ENCODE measurements at regions of chr14 and their contacts with region 1.

Region 1: DNA sequence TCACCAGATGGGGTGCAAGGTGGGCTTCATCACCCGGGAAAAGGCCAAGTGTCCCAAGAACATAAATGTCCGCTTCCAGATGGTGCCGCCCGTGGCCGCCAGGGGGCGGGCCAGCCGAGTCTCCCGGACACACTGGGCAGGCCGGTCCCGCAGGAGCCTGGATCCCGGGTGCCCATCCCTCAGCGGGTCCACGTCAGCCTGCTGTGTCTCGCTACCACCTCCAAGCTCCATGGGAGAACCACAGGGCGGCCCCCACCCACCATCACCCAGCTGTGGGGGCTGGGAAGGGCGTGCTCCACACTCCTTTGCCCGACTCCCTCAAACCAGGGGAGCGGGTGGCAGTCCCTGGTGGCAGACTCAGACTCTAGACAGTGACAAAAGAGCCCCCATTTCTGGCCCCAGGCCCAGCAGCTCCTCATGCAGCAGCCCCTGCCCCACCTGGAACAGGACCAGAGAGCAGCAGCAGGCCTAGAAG is 22.0 kb upstream of the NUDT14 start:
- DNase-seq: peak; percentile 42 to 72 (median 55)
- H3K4me3 ChIP-seq: no peak overlapping the region
- H3K4me3 Mint-ChIP-seq: no peak overlapping the region
- H3K27ac ChIP-seq: no peak overlapping the region
- H3K27ac Mint-ChIP-seq: no peak overlapping the region
- H3K4me1 ChIP-seq: peaks cover 19% of the 10 kb centered on the region
- H3K4me1 Mint-ChIP-seq: peaks cover 0 to 14% (median 5%) of the 10 kb centered on the region in 3 donors
- H3K27me3 ChIP-seq: peaks cover 6% of the 10 kb centered on the region
- H3K27me3 Mint-ChIP-seq: peaks cover 25 to 26% of the 10 kb centered on the region in 2 donors

Region 2: DNA sequence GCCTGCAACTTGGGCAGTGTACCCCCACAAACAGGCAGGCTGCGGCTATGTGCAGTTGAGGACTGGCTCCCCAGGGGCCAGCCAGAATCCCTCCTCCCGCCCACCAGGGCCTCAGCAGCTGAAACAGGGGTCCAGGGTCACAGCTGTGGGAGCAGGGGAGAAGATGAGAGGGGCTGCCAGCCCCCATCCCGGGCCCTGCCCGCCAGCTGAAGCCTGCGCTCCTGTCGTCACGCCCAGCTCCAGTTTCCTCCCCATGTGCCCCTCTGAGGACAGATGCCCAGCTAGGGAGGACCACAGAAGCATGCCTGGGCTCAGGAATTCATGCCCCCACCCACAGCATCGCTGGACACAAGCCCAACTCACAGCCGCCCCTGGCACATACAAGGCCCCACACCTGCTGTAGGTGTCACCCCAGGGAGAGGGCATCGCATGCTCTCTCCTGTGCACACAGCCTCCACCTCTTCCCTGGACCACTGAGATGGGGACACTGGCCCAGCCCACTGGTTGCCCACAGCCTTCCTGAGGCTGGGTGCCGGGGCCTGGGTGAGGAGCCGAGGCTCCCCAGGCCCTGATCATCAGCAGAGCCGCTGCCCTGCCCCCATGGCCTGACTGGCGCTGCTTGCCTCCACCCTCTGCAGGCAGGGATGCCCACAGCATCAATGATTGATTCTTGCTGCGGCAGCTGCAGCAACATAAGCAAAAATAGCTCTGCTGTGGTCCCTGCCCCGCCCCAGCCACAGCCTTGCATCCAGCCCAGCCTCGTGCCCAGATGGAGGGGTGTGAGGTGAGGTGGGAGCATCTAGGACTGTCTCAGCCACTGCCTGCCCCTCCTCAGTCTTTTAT is 221.2 kb before region 1 on chr14:
- CTCF ChIA-PET with region 1: no interaction called
- POLR2A ChIA-PET with region 1: no interaction called
- DNase-seq: no peak
- H3K4me3 ChIP-seq: no peak overlapping the region
- H3K4me3 Mint-ChIP-seq: no peak overlapping the region
- H3K27ac ChIP-seq: no peak overlapping the region
- H3K27ac Mint-ChIP-seq: peak overlapping the region in 1 of 8 donors; percentile 51
- H3K4me1 ChIP-seq: peaks cover 13% of the 10 kb centered on the region
- H3K4me1 Mint-ChIP-seq: peaks cover 5 to 23% (median 7%) of the 10 kb centered on the region in 3 donors
- H3K27me3 ChIP-seq: peaks cover 15% of the 10 kb centered on the region
- H3K27me3 Mint-ChIP-seq: peaks cover 18 to 23% of the 10 kb centered on the region in 2 donors

Region 3: DNA sequence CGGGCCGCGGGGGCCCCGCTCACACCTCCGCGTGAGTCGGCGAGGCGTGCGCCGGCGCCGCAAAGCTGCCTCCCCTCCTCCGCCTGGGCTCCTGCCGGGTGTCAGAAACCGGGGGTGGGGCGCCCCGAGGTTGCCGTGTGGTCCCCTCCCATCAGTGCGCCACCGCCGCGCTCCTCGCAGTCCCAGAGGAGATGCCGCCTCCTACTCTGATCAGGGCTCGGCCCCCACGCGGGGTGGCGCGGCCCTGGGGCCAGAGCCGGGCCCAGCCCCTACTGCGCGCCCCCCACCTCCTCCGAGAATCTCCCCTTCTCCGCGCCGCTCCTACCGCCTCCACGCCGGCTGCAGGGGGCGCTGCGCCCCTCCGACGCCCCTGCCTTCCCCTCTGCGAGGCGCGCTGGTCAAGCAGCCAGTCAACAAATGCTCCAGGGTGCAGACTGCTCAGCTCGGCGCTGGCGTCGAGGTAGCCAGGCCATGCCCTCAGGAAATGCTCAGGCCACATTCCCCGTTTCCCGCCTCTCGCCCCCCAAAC is 34.1 kb before region 1 on chr14:
- CTCF ChIA-PET with region 1: no interaction called
- POLR2A ChIA-PET with region 1: no interaction called
- DNase-seq: peak in 3 of 5 donors; percentile 14 to 30 (median 22)
- H3K4me3 ChIP-seq: no peak overlapping the region
- H3K4me3 Mint-ChIP-seq: peak overlapping the region in 6 of 7 donors; percentile 39 to 80 (median 68)
- H3K27ac ChIP-seq: no peak overlapping the region
- H3K27ac Mint-ChIP-seq: no peak overlapping the region
- H3K4me1 ChIP-seq: peaks cover 16% of the 10 kb centered on the region
- H3K4me1 Mint-ChIP-seq: peaks cover 0 to 26% (median 8%) of the 10 kb centered on the region in 3 donors
- H3K27me3 ChIP-seq: peaks cover 15% of the 10 kb centered on the region
- H3K27me3 Mint-ChIP-seq: peaks cover 13 to 31% of the 10 kb centered on the region in 2 donors

Region 4: GRCh38 chr14:105351920-105352851 is 149.1 kb after region 1 on chr14:
- CTCF ChIA-PET with region 1: interaction called, 24 read pairs
- POLR2A ChIA-PET with region 1: no interaction called
- DNase-seq: peak; percentile 72 to 90 (median 77)
- H3K4me3 ChIP-seq: no peak overlapping the region
- H3K4me3 Mint-ChIP-seq: no peak overlapping the region
- H3K27ac ChIP-seq: no peak overlapping the region
- H3K27ac Mint-ChIP-seq: peak overlapping the region in 3 of 8 donors; percentile 47 to 85 (median 73)
- H3K4me1 ChIP-seq: peaks cover 4% of the 10 kb centered on the region
- H3K4me1 Mint-ChIP-seq: peaks cover 0 to 6% (median 3%) of the 10 kb centered on the region in 3 donors
- H3K27me3 ChIP-seq: no peaks in the 10 kb centered on the region
- H3K27me3 Mint-ChIP-seq: no peaks in the 10 kb centered on the region